H1 (cell line): ENCODE measurements at regions of chr22 and their contacts with region 1.

Region 1: GRCh38 chr22:37472418-37473006 is 13.7 kb downstream of the MFNG start:
- DNase-seq: peak in 1 of 2 experiments; percentile 83
- H3K4me3 ChIP-seq: no peak overlapping the region; a peak in 1 of 8 replicates
- H3K27ac ChIP-seq: no peak overlapping the region
- H3K4me1 ChIP-seq: no peaks in the 10 kb centered on the region; a peak in 3 of 7 replicates
- H3K27me3 ChIP-seq: no peaks in the 10 kb centered on the region; a peak in 1 of 7 replicates
- CTCF ChIP-seq: peak; percentile 85 to 92 (median 89)
- EP300 ChIP-seq: no peak
- POLR2A ChIP-seq: no peak
- RAD21 ChIP-seq: peak; percentile 66 to 71

Region 2: GRCh38 chr22:37353839-37354238 is 118.7 kb before region 1 on chr22:
- CTCF ChIA-PET with region 1: no interaction called
- POLR2A ChIA-PET with region 1: no interaction called
- DNase-seq: no peak
- H3K4me3 ChIP-seq: no peak overlapping the region
- H3K27ac ChIP-seq: no peak overlapping the region
- H3K4me1 ChIP-seq: no peaks in the 10 kb centered on the region
- H3K27me3 ChIP-seq: no peaks in the 10 kb centered on the region
- CTCF ChIP-seq: no peak
- EP300 ChIP-seq: no peak
- POLR2A ChIP-seq: no peak
- RAD21 ChIP-seq: no peak

Region 3: GRCh38 chr22:37396488-37397084 is 75.9 kb before region 1 on chr22:
- CTCF ChIA-PET with region 1: interaction called, 12 read pairs
- POLR2A ChIA-PET with region 1: no interaction called
- DNase-seq: no peak
- H3K4me3 ChIP-seq: no peak overlapping the region
- H3K27ac ChIP-seq: no peak overlapping the region
- H3K4me1 ChIP-seq: peaks cover 0 to 3% (median 0%) of the 10 kb centered on the region in 4 experiments; a peak in 4 of 7 replicates
- H3K27me3 ChIP-seq: no peaks in the 10 kb centered on the region
- CTCF ChIP-seq: no peak
- EP300 ChIP-seq: no peak
- POLR2A ChIP-seq: no peak
- RAD21 ChIP-seq: no peak

Region 4: GRCh38 chr22:37457093-37457893 is 15.2 kb before region 1 on chr22:
- CTCF ChIA-PET with region 1: interaction called, 56 read pairs
- POLR2A ChIA-PET with region 1: no interaction called
- DNase-seq: peak; percentile 56 to 97
- H3K4me3 ChIP-seq: no peak overlapping the region
- H3K27ac ChIP-seq: no peak overlapping the region
- H3K4me1 ChIP-seq: no peaks in the 10 kb centered on the region; a peak in 2 of 7 replicates
- H3K27me3 ChIP-seq: no peaks in the 10 kb centered on the region
- CTCF ChIP-seq: peak; percentile 97 to 99 (median 99)
- EP300 ChIP-seq: no peak
- POLR2A ChIP-seq: no peak
- RAD21 ChIP-seq: peak; percentile 98 to 100

Region 5: DNA sequence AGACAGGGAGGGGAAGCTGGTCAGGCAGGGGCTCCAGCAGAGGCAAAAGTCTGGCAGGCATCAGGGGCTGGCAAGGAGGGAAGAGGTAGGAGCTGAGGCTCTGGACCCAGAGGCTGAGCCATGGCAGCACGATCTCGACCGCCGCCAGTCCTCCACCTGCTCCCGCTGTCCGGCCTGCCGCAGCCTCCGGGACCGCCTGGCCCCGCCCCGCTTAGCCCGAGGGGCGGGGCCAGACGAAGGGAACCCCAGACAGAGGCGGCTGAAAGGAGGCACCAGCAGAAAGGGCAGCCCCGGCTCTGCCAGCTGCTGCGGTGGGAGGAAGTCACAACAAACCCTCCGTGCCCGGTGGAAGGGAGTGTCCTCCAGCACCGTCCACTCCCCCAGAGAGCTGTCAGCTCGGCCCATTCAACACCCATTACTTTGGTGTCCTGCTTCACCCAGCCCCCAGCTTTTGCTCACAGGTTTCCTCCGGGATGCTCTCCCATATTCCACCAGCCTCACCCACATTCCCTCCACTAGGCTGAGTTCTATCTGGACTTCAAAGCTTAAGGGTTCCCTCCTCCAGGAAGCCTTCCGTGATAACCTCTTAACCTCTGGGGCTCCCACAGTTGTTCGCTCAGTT is 13.8 kb after region 1 on chr22 and contains the start of gene MFNG:
- CTCF ChIA-PET with region 1: interaction called, 312 read pairs
- POLR2A ChIA-PET with region 1: interaction called, 6 read pairs
- DNase-seq: peak in 1 of 2 experiments; percentile 83
- H3K4me3 ChIP-seq: peak within 1 kb of the TSS in 2 of 4 experiments; percentile 23 to 40; a peak in 3 of 8 replicates
- H3K27ac ChIP-seq: no peak within 1 kb of the TSS
- H3K4me1 ChIP-seq: peaks cover 0 to 32% (median 21%) of the 10 kb centered on the region in 4 experiments; a peak in 6 of 7 replicates
- H3K27me3 ChIP-seq: peaks cover 0 to 4% (median 0%) of the 10 kb centered on the region in 4 experiments; a peak in 1 of 7 replicates
- CTCF ChIP-seq: peak in 1 of 3 experiments; percentile 32; a peak in 1 of 4 replicates
- EP300 ChIP-seq: no peak
- POLR2A ChIP-seq: no peak
- RAD21 ChIP-seq: no peak
- total RNA-seq, gene MFNG: 1.7 and 1.8 TPM in 2 replicates

Region 6: DNA sequence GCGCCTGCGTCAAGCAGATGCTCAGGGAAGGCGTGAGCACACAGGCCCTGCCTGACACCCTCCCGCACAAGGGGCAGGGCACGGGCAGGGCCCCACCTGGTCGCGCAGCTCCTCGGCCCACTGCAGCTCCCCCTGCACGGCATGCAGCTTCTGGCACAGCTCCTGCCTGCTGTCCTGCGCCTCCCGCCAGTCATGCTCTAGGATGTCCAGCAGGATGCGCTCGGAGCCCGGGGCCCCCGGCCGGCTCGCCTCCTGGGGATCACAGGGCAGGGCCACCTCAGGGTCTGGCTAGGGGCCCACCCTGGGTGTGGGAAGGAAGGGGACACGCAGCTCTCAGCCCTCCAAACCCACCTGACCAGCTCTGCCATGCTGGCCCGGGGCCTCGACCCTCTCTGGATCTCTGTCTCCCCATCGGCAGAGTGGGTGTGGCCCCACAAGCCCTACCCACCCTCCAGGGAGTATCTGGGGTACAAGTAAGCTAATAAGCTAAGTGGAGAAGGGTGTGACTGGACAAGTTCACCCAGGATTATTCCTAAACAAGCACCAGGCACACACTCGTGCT is 36.0 kb after region 1 on chr22:
- CTCF ChIA-PET with region 1: interaction called, 11 read pairs
- POLR2A ChIA-PET with region 1: no interaction called
- DNase-seq: no peak
- H3K4me3 ChIP-seq: no peak overlapping the region
- H3K27ac ChIP-seq: no peak overlapping the region
- H3K4me1 ChIP-seq: peaks cover 0 to 2% (median 1%) of the 10 kb centered on the region in 4 experiments; a peak in 3 of 7 replicates
- H3K27me3 ChIP-seq: no peaks in the 10 kb centered on the region; a peak in 1 of 7 replicates
- CTCF ChIP-seq: no peak; a peak in 1 of 4 replicates
- EP300 ChIP-seq: no peak
- POLR2A ChIP-seq: no peak
- RAD21 ChIP-seq: no peak; a peak in 1 of 4 replicates

Region 7: GRCh38 chr22:37561212-37562048 is 88.9 kb after region 1 on chr22:
- CTCF ChIA-PET with region 1: interaction called, 21 read pairs
- POLR2A ChIA-PET with region 1: no interaction called
- DNase-seq: peak; percentile 70 to 99
- H3K4me3 ChIP-seq: peak overlapping the region; percentile 29 to 71 (median 40)
- H3K27ac ChIP-seq: no peak overlapping the region
- H3K4me1 ChIP-seq: peaks cover 7 to 46% (median 22%) of the 10 kb centered on the region in 4 experiments
- H3K27me3 ChIP-seq: peaks cover 6 to 22% (median 16%) of the 10 kb centered on the region in 4 experiments; a peak in 6 of 7 replicates
- CTCF ChIP-seq: peak; percentile 78 to 88 (median 84)
- EP300 ChIP-seq: 0 out of 3 replicates have a peak, but pooled peaks of 1 of the 2 experiments have one; percentile 53
- POLR2A ChIP-seq: peak in 1 of 2 experiments; percentile 41; a peak in 1 of 3 replicates
- RAD21 ChIP-seq: peak; percentile 40 to 62; a peak in 3 of 4 replicates